Activated CD8-positive, alpha-beta T cell treated with anti-CD3 and anti-CD28 coated beads, Interleukin-2, amount 10 ng/mL, durations not matched to agents 7 days and 5 days (primary cell): ENCODE measurements at regions of chr19 and their contacts with region 1.

Region 1: DNA sequence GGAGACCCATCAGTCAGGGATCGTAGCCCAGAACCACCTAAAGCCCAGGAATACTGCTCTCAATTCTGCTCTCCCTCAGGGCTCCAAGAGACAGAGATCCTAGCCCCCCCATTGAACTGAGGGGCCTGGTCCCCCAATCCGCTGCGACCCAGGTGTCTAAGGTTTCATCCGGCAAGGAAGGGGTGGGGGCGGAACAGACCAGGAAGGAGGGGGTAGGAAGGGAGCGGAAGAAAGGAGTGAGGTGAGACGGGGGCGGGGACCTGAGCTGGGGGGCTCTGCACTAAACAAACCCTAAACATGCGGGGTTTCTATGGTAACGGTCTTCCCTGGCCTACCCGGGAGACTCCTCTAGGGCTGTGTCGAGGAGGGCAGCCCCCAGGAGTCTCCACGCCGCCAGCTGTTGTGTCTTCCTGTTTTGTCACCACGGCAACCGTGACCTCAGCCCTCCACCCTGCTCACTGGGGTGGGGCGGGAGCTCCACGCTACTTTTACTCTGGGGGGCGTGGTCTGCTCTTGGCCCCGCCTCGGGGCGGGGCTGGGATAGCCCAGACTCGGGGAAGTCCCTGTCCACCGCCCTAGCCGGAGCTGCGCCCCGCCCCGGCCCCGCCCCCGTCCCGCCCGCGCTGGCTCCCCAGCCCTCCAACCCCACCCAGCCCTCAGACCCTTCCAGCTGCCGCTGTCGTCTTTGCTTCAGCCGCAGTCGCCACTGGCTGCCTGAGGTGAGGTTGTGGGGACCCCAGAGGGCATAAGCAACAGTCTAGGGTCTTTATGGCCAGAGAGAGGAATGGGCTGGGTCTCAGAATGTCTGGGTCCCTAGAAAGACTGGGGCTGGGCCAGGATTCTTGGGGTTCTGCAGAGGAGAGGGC is at the start of gene MYADM:
- DNase-seq: peak; percentile 100
- ATAC-seq: peak; percentile 54
- H3K4me3 Mint-ChIP-seq: peak within 1 kb of the TSS; percentile 97
- H3K27ac Mint-ChIP-seq: peak within 1 kb of the TSS; percentile 94
- H3K4me1 Mint-ChIP-seq: peaks cover 36% of the 10 kb centered on the region
- H3K27me3 Mint-ChIP-seq: no peaks in the 10 kb centered on the region
- total RNA-seq, gene MYADM: 92.9 to 98.1 TPM

Region 2: GRCh38 chr19:53879140-53880081 is 12.0 kb after region 1 on chr19:
- CTCF ChIA-PET with region 1: interaction called, 5 read pairs
- POLR2A ChIA-PET with region 1: interaction called, 13 read pairs
- DNase-seq: peak; percentile 90
- ATAC-seq: peak; percentile 79
- H3K4me3 Mint-ChIP-seq: no peak overlapping the region
- H3K27ac Mint-ChIP-seq: no peak overlapping the region
- H3K4me1 Mint-ChIP-seq: peaks cover 44% of the 10 kb centered on the region
- H3K27me3 Mint-ChIP-seq: peaks cover 14% of the 10 kb centered on the region